Heart left ventricle (tissue), 16 donors: ENCODE measurements at regions of chr20 and their contacts with region 1.

Region 1: GRCh38 chr20:60765821-60766403 is 486.1 kb upstream of the CDH4 start:
- DNase-seq: no peak
- ATAC-seq: no peak
- H3K4me3 ChIP-seq: no peak overlapping the region
- H3K27ac ChIP-seq: no peak overlapping the region
- H3K4me1 ChIP-seq: no peaks in the 10 kb centered on the region
- H3K27me3 ChIP-seq: peaks cover 0 to 4% (median 0%) of the 10 kb centered on the region in 9 donors
- CTCF ChIP-seq: no peak
- POLR2A ChIP-seq: no peak

Region 2: DNA sequence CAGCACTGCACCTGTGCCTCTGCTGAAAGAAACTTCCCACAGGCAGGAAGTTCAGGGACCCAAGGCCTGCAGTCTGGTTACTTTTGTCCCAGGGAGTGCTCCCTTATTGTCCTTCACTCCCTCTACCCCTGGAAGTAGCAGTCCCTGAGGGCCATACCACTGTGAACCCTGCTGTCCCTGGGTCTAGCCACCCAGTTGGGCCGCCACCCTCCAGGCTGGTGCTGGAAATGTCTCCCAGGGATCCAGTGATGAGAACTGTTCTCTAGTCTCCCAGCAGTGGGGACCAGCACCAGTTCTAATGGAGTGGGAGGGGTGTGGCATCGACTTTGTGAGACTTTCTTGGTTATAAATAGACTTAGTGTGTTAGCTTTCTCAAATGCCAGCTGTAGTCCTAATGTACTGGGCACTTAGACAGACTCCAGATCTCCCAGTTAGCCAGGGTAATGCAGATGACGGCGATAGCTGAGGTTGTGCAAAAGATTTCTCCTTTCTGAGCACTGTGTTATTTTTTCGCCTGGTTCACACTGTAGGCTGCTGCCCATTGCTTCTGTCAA is 345.2 kb before region 1 on chr20:
- intact Hi-C with region 1: no loop called
- DNase-seq: no peak
- ATAC-seq: peak in 3 of 4 donors; percentile 7 to 88 (median 70)
- H3K4me3 ChIP-seq: no peak overlapping the region
- H3K27ac ChIP-seq: no peak overlapping the region
- H3K4me1 ChIP-seq: no peaks in the 10 kb centered on the region
- H3K27me3 ChIP-seq: no peaks in the 10 kb centered on the region
- CTCF ChIP-seq: no peak
- POLR2A ChIP-seq: no peak

Region 3: DNA sequence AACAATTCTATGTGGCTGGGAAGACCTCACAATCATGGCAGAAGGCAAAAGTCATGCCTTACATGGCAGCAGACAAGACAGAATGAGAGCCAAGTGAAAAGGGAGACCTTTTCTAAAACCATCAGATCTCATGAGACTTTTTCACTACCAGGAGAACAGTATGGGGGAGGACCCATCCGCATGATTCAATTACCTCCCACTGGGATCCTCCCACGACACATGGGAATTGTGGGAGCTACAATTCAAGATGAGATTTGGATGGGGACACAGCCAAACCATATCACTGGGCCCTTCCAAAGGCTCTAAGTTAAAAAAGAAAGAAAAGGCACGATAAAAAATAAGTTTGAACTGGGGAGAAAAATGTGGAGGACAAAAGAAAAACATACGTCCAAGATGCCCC is 79.2 kb after region 1 on chr20:
- intact Hi-C with region 1: loop called in 1 of 10 experiments (anchors 10 kb)
- DNase-seq: no peak
- ATAC-seq: no peak
- H3K4me3 ChIP-seq: no peak overlapping the region
- H3K27ac ChIP-seq: no peak overlapping the region
- H3K4me1 ChIP-seq: no peaks in the 10 kb centered on the region
- H3K27me3 ChIP-seq: peaks cover 0 to 7% (median 0%) of the 10 kb centered on the region in 9 donors
- CTCF ChIP-seq: no peak
- POLR2A ChIP-seq: no peak